Mucosa of descending colon (tissue), 3 donors: ENCODE measurements at regions of chr15 and their contacts with region 1.

Region 1: GRCh38 chr15:57082054-57082728 is 163.7 kb downstream of the TCF12 start:
- DNase-seq: peak in 1 of 3 donors; percentile 63
- ATAC-seq: peak; percentile 91
- H3K4me3 ChIP-seq: no peak overlapping the region
- H3K4me1 ChIP-seq: peaks cover 22% of the 10 kb centered on the region
- CTCF ChIP-seq: no peak

Region 2: DNA sequence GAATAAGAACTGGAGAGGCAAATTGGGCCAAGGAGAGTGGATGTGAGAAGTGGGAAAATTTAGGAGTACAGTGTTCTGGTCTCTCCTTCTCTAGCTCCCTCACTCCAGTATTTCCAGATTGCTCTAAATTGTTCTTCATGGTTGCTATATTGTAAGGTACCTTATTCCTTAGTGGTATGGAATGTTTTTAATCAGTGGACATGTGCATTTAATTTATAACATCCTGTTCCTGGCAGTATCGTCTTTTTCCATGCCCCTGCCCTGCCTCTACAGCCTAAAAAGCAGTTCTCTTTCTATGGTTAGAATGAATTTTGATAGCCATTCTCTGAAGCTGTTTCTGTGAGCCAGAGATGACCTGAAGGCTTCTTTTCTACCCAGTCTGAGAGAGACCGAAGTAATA is 16.7 kb after region 1 on chr15:
- intact Hi-C with region 1: loop called in 1 of 2 experiments (anchors 1 kb)
- DNase-seq: no peak
- ATAC-seq: no peak
- H3K4me3 ChIP-seq: no peak overlapping the region
- H3K4me1 ChIP-seq: peaks cover 8% of the 10 kb centered on the region
- CTCF ChIP-seq: no peak

Region 3: GRCh38 chr15:57146506-57147201 is 64.5 kb after region 1 on chr15:
- intact Hi-C with region 1: no loop called
- DNase-seq: peak in 1 of 3 donors; percentile 77
- ATAC-seq: peak; percentile 64
- H3K4me3 ChIP-seq: no peak overlapping the region
- H3K4me1 ChIP-seq: peaks cover 9% of the 10 kb centered on the region
- CTCF ChIP-seq: peak; percentile 28